Uterus (tissue), 4 donors: ENCODE measurements at regions of chr1 and their contacts with region 1.

Region 1: GRCh38 chr1:155989242-155990004 is 11.1 kb upstream of the ARHGEF2 start:
- DNase-seq: peak; percentile 75 to 79
- H3K4me3 ChIP-seq: peak overlapping the region; percentile 29 to 35
- H3K27ac ChIP-seq: peak overlapping the region; percentile 51 to 76
- H3K4me1 ChIP-seq: no peaks in the 10 kb centered on the region
- H3K27me3 ChIP-seq: no peaks in the 10 kb centered on the region
- CTCF ChIP-seq: peak; percentile 98 to 100 (median 98)
- POLR2A ChIP-seq: peak in 1 of 2 donors; percentile 30

Region 2: GRCh38 chr1:155925506-155925905 is 63.9 kb before region 1 on chr1:
- intact Hi-C with region 1: no loop called
- DNase-seq: no peak
- H3K4me3 ChIP-seq: no peak overlapping the region
- H3K27ac ChIP-seq: no peak overlapping the region
- H3K4me1 ChIP-seq: peaks cover 0 to 3% of the 10 kb centered on the region in 2 donors
- H3K27me3 ChIP-seq: no peaks in the 10 kb centered on the region
- CTCF ChIP-seq: no peak
- POLR2A ChIP-seq: no peak

Region 3: GRCh38 chr1:155938220-155938627 is 51.2 kb before region 1 on chr1:
- intact Hi-C with region 1: loop called (anchors 5 kb)
- DNase-seq: no peak
- H3K4me3 ChIP-seq: no peak overlapping the region
- H3K27ac ChIP-seq: peak overlapping the region; percentile 45 to 48
- H3K4me1 ChIP-seq: peaks cover 4 to 6% of the 10 kb centered on the region in 2 donors
- H3K27me3 ChIP-seq: no peaks in the 10 kb centered on the region
- CTCF ChIP-seq: peak; percentile 53 to 89 (median 74)
- POLR2A ChIP-seq: no peak